SK-N-SH (cell line): ENCODE measurements at regions of chr11 and their contacts with region 1.

Region 1: DNA sequence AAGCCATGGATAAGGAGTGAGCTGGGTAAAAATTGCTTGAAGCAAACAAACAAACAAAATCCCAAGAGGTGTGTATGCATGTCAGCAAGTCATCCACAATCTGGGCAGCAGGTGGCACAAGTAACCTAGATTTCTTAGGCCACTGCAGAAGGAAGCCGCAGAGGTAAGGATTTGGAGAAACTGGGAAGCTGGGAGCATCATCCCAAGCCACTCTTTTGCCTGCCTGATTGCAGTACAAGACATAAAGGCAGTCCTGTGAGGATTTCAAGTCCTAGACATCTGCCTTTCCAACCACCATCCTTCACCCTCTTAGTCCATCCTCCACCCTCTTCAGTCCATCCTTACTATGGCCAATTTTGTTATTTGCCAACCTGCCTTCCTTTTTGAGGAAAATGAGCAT is 67.2 kb upstream of the BMAL1 start:
- DNase-seq: peak; percentile 62
- H3K4me3 ChIP-seq: no peak overlapping the region
- H3K27ac ChIP-seq: no peak overlapping the region
- H3K4me1 ChIP-seq: peaks cover 0 to 13% of the 10 kb centered on the region in 2 experiments; a peak in 3 of 4 replicates
- H3K27me3 ChIP-seq: no peaks in the 10 kb centered on the region
- CTCF ChIP-seq: peak; percentile 86
- EP300 ChIP-seq: no peak
- RAD21 ChIP-seq: peak; percentile 96

Region 2: GRCh38 chr11:13105237-13105844 is 105.1 kb before region 1 on chr11:
- CTCF ChIA-PET with region 1: no interaction called
- POLR2A ChIA-PET with region 1: no interaction called
- DNase-seq: peak; percentile 41
- H3K4me3 ChIP-seq: no peak overlapping the region
- H3K27ac ChIP-seq: peak overlapping the region in 1 of 2 experiments; percentile 40; a peak in 1 of 4 replicates
- H3K4me1 ChIP-seq: peaks cover 0 to 8% of the 10 kb centered on the region in 2 experiments; a peak in 1 of 4 replicates
- H3K27me3 ChIP-seq: peaks cover 9% of the 10 kb centered on the region; the same call in 1 of the 2 replicates
- CTCF ChIP-seq: no peak
- EP300 ChIP-seq: 0 out of 4 replicates have a peak, but pooled peaks of 1 of the 2 experiments have one; percentile 20
- RAD21 ChIP-seq: no peak

Region 3: GRCh38 chr11:13183094-13183825 is 27.2 kb before region 1 on chr11:
- CTCF ChIA-PET with region 1: interaction called, 10 read pairs
- POLR2A ChIA-PET with region 1: no interaction called
- DNase-seq: peak; percentile 26
- H3K4me3 ChIP-seq: peak overlapping the region; percentile 40 to 52; a peak in 3 of 4 replicates
- H3K27ac ChIP-seq: no peak overlapping the region
- H3K4me1 ChIP-seq: no peaks in the 10 kb centered on the region; a peak in 1 of 4 replicates
- H3K27me3 ChIP-seq: no peaks in the 10 kb centered on the region
- CTCF ChIP-seq: peak; percentile 63
- EP300 ChIP-seq: no peak
- RAD21 ChIP-seq: peak; percentile 73

Region 4: GRCh38 chr11:13229711-13230318 is 19.4 kb after region 1 on chr11:
- CTCF ChIA-PET with region 1: interaction called, 36 read pairs
- POLR2A ChIA-PET with region 1: no interaction called
- DNase-seq: no peak
- H3K4me3 ChIP-seq: no peak overlapping the region
- H3K27ac ChIP-seq: no peak overlapping the region; a peak in 1 of 4 replicates
- H3K4me1 ChIP-seq: peaks cover 0 to 3% of the 10 kb centered on the region in 2 experiments; a peak in 1 of 4 replicates
- H3K27me3 ChIP-seq: no peaks in the 10 kb centered on the region
- CTCF ChIP-seq: no peak
- EP300 ChIP-seq: no peak
- RAD21 ChIP-seq: no peak

Region 5: DNA sequence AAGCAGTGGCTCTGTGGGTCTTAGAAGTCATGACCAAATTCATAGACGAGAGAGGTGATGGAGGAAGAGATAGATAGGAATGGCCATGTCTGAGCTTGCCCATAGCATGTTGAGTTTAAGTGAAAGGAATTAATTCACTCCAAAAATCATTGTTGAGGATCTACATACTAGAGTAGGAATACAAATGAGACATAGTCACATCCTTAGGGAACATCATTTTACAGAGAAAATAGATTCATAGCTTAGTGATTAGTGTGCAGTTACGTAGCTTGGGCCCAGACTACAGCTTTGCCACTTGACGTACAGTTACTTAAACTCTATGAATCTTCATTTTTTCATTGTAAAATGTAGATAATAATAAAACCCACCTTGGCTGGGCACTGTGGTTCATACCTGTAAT is 45.8 kb after region 1 on chr11:
- CTCF ChIA-PET with region 1: interaction called, 11 read pairs
- POLR2A ChIA-PET with region 1: no interaction called
- DNase-seq: no peak
- H3K4me3 ChIP-seq: no peak overlapping the region
- H3K27ac ChIP-seq: peak overlapping the region in 1 of 2 experiments; percentile 15; a peak in 2 of 4 replicates
- H3K4me1 ChIP-seq: peaks cover 4 to 10% of the 10 kb centered on the region in 2 experiments; a peak in 3 of 4 replicates
- H3K27me3 ChIP-seq: no peaks in the 10 kb centered on the region
- CTCF ChIP-seq: no peak
- EP300 ChIP-seq: no peak
- RAD21 ChIP-seq: no peak

Region 6: DNA sequence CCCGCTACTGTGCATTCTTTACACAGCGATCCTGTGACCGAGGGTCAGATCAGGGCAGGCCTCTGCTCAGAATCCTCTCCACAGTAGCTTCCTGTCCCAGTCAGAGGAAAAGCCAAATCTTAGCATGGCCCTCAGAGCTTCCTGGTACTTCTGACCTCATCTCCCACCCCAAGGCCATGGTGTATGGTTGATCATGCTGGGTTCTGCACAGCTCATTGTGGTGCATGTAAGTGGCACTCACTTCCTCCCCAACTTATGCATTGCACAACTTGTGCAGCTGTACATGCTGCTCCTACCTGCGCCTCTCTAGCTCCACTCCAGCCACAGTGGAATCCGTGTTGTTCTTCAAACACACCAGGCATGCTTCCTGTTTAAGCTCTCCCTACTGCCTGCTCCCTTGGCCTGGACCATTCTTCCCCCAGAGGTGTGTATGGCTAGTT is 87.5 kb after region 1 on chr11:
- CTCF ChIA-PET with region 1: interaction called, 40 read pairs
- POLR2A ChIA-PET with region 1: no interaction called
- DNase-seq: no peak
- H3K4me3 ChIP-seq: no peak overlapping the region
- H3K27ac ChIP-seq: no peak overlapping the region; a peak in 1 of 4 replicates
- H3K4me1 ChIP-seq: peaks cover 0 to 35% of the 10 kb centered on the region in 2 experiments; a peak in 1 of 4 replicates
- H3K27me3 ChIP-seq: no peaks in the 10 kb centered on the region
- CTCF ChIP-seq: no peak
- EP300 ChIP-seq: no peak
- RAD21 ChIP-seq: no peak

Region 7: DNA sequence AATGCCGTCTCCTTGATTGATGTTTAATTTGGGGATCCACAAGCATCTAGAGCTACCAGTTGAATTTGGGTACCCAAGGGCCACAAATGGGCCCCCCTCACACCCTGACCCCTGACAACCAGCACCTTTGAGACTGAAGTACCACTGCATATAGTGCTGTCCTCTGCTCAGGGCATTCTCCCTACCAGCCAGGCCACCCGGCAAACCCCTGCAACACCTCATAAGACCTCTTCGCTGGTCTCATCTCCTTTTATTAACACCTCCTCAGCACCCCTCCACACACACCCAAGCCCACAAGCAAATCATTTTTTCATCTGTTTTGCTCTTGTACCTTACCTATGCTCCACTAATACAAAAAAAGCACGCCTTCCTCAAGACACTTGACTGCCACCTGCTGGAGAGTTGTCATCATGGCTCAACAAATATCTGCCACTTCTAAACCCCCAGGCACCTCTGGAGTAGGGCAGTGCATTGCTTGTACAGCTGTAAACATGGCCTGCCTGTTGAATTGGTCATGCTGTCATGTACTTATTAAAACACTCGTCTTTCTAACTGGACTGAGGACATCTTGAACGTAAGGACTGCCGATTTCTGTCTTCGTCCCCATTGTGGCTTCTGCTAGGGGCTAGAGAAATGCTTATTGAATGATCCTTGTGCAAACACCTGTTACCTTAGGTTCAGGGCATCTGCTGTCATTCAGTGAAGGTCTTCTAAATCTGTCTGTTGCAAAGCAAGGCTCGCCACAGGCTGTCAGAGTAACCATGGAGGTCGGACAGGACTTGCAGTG is 133.7 kb after region 1 on chr11:
- CTCF ChIA-PET with region 1: interaction called, 237 read pairs
- POLR2A ChIA-PET with region 1: no interaction called
- DNase-seq: peak; percentile 73
- H3K4me3 ChIP-seq: no peak overlapping the region; a peak in 1 of 4 replicates
- H3K27ac ChIP-seq: no peak overlapping the region
- H3K4me1 ChIP-seq: peaks cover 3 to 5% of the 10 kb centered on the region in 2 experiments; a peak in 3 of 4 replicates
- H3K27me3 ChIP-seq: no peaks in the 10 kb centered on the region
- CTCF ChIP-seq: peak; percentile 85
- EP300 ChIP-seq: no peak
- RAD21 ChIP-seq: peak; percentile 90

Region 8: DNA sequence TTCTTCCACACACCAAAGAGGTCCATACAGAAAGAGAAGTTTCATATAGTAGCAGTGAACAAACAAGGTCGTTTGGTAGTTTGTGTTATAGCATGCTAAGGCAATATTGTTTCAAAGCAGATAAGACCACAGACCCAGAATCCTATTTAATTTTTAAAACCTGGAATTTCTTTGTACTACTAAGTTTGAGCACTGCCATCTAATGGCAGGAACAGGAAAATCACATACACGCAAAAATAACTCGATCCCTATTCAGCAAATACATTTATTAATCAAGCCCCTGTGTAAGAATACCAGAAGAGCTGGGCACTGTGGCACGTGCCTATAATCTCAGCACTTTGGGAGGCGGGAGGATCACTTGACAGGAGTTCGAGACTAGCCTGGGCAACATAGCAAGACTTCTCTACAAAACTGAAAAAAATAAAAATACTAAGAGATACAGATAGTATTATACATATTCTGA is 255.5 kb after region 1 on chr11:
- CTCF ChIA-PET with region 1: interaction called, 17 read pairs
- POLR2A ChIA-PET with region 1: no interaction called
- DNase-seq: peak; percentile 58
- H3K4me3 ChIP-seq: no peak overlapping the region; a peak in 1 of 4 replicates
- H3K27ac ChIP-seq: no peak overlapping the region
- H3K4me1 ChIP-seq: peaks cover 12 to 15% of the 10 kb centered on the region in 2 experiments; a peak in 3 of 4 replicates
- H3K27me3 ChIP-seq: peaks cover 10% of the 10 kb centered on the region; the same call in 1 of the 2 replicates
- CTCF ChIP-seq: peak; percentile 76
- EP300 ChIP-seq: no peak
- RAD21 ChIP-seq: peak; percentile 65